ENCODE measurements at regions of chr13 and their contacts with region 1.

Region 1: DNA sequence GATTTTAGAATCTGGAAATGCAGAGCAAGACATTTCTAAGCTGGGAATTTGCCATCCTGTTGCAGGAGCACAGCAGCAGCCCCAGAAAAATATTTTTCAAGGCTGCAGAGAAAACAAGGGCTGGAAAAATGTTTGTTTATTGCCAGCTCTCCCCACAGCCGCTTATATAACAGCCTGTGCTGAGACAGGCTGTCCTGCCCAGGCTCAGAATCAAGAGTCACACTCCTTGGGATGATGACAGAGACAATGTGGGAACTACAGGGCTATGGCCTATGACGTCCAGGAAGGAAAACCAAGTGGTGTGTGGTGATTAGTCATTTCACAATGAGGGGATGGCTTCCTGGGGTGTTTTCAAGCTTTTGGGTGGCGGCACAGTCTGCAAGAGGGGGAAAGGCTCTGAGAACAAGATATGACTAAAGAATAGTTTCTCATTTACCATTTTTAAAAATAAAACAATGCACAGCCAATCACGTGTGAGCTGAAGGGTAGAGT is 136.3 kb upstream of the SERP2 start:
- DNase-seq: peak in 3 of 4 donors; percentile 62 to 81 (median 74)
- ATAC-seq: peak; percentile 91
- H3K4me3 ChIP-seq: no peak overlapping the region
- H3K27ac ChIP-seq: peak overlapping the region; percentile 53 to 85
- H3K4me1 ChIP-seq: peaks cover 24 to 33% of the 10 kb centered on the region in 2 donors
- H3K27me3 ChIP-seq: no peaks in the 10 kb centered on the region
- CTCF ChIP-seq: no peak

Region 2: DNA sequence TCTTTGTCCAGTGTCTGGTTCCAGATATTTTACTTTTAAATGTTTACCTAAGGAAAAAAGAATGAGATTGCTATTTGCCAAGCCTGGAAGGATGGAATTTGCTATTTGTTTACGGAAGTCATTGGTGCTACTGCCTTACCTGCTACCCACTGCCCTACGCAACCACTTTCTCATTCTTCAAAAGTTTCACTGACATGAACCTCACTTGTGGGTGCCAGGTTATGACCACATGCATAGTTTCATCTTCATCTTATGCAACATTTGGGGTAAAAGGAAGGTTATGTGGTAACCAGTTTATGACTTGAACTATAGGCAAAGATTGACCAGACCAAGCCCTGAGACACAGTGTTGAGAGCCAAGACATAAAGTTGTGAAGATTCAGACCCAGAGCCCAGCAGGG is 215.2 kb before region 1 on chr13:
- intact Hi-C with region 1: no loop called
- DNase-seq: no peak
- ATAC-seq: no peak
- H3K4me3 ChIP-seq: no peak overlapping the region
- H3K27ac ChIP-seq: no peak overlapping the region
- H3K4me1 ChIP-seq: no peaks in the 10 kb centered on the region
- H3K27me3 ChIP-seq: no peaks in the 10 kb centered on the region
- CTCF ChIP-seq: no peak

Region 3: DNA sequence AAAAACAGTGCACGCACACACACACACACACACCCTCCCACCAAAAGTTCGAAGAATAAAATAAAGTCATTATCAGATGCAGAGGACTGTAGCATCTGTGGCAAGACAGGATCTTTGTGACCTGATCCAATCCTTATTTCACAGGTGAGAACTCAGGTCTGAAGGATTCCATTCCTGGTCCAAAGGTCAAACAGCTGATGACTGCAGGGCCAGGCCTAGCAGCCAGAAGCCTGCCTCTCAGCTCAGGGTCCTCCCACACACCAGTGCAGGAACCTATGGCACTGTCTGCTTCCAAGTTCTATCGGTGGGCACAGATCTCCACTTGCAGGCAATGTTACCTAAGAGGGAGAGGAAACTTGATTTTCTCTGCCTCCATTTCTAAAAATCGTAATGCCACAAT is 193.8 kb after region 1 on chr13:
- intact Hi-C with region 1: loop called in 1 of 2 experiments (anchors 5 kb)
- DNase-seq: no peak
- ATAC-seq: no peak
- H3K4me3 ChIP-seq: no peak overlapping the region
- H3K27ac ChIP-seq: no peak overlapping the region
- H3K4me1 ChIP-seq: peaks cover 0 to 26% of the 10 kb centered on the region in 2 donors
- H3K27me3 ChIP-seq: no peaks in the 10 kb centered on the region
- CTCF ChIP-seq: no peak